Panc1 (cell line): ENCODE measurements at regions of chr11 and their contacts with region 1.

Region 1: DNA sequence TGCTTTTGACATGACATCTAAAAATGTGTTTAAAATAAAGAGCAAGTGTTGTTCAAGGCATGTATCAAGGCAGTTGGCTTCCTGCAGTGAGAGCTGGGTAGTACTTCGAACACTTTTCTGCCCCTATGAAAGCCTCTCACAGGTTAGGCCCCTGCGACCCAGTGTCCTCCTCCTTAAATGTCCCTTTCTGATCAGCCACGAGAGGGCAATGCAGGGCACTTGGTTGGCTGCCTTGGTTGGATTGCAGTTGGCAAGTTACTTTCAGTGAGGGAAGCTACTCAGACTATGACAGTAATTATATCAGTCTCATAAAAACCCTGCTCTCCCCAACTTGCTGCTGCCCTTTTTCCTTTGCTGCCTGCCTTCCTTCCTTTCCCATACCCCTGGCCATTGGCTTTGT is 743.8 kb downstream of the NTM start:
- DNase-seq: no peak
- ATAC-seq: peak; percentile 72; the same call in 1 of the 2 replicates
- H3K4me3 ChIP-seq: no peak overlapping the region
- H3K27ac ChIP-seq: no peak overlapping the region
- H3K4me1 ChIP-seq: no peaks in the 10 kb centered on the region
- H3K27me3 ChIP-seq: peaks cover 2% of the 10 kb centered on the region; the same call in 1 of the 2 replicates
- CTCF ChIP-seq: peak; percentile 66

Region 2: DNA sequence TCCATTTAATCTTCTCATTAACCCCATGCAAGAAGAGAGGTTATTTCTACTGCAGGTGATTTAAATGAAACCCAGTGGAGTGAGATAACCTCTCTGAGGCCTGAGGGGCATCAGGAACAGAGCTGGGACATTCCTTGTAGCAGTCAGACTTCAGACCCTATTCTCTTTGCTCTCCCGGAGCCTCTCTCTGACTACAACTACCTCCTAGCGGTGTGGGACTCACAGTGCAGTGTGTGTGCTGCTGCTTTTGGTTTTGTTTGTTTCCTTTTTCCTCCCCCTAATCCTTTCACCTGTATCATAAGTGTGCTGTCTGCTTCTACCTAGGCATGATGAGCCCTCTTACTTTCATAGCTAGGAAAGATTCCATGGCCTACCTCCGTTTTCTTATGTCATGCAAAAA is 25.9 kb after region 1 on chr11:
- CTCF ChIA-PET with region 1: no interaction called
- POLR2A ChIA-PET with region 1: interaction called, 3 read pairs
- in situ Hi-C with region 1: no loop called
- intact Hi-C with region 1: loop called (anchors 1 kb)
- DNase-seq: no peak
- ATAC-seq: 0 out of 2 replicates have a peak, but pooled peaks have one; percentile 58
- H3K4me3 ChIP-seq: no peak overlapping the region
- H3K27ac ChIP-seq: no peak overlapping the region
- H3K4me1 ChIP-seq: no peaks in the 10 kb centered on the region
- H3K27me3 ChIP-seq: no peaks in the 10 kb centered on the region
- CTCF ChIP-seq: peak; percentile 42